Natural killer cell (primary cell): ENCODE measurements at regions of chr10 and their contacts with region 1.

Region 1: DNA sequence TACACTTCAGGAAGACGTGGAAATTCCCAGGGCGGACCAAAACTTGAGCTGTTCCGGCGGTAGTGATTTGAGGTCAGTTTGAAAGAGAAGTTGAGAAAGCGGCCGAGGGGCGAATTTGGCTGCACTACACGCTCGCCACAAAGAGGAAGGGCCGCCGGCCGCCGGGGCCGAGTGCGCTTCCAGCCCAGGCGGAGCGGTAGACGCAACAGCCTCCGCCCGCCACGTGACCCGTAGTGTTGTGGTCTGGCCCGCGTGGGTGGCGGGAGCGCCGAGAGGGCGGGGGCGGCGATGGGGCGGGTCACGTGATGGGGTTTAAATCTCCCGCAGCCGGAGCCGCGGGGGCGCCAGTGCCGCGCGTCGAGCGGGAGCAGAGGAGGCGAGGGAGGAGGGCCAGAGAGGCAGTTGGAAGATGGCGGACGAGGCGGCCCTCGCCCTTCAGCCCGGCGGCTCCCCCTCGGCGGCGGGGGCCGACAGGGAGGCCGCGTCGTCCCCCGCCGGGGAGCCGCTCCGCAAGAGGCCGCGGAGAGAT is at the start of gene SIRT1:
- DNase-seq: peak; percentile 90 to 95
- ATAC-seq: peak; percentile 74 to 87 (median 79)
- H3K4me3 ChIP-seq: peak within 1 kb of the TSS; percentile 63
- H3K4me3 Mint-ChIP-seq: peak within 1 kb of the TSS; percentile 98
- H3K27ac ChIP-seq: peak within 1 kb of the TSS; percentile 87
- H3K27ac Mint-ChIP-seq: peak within 1 kb of the TSS; percentile 95
- H3K4me1 ChIP-seq: peaks cover 23% of the 10 kb centered on the region
- H3K4me1 Mint-ChIP-seq: peaks cover 37 to 46% of the 10 kb centered on the region in 2 donors
- H3K27me3 ChIP-seq: no peaks in the 10 kb centered on the region
- H3K27me3 Mint-ChIP-seq: no peaks in the 10 kb centered on the region
- CTCF ChIP-seq: no peak
- total RNA-seq, gene SIRT1: 38.2 to 51.0 (median 48.2) TPM

Region 2: GRCh38 chr10:67669978-67670377 is 214.4 kb before region 1 on chr10:
- intact Hi-C with region 1: no loop called
- DNase-seq: no peak
- ATAC-seq: no peak
- H3K4me3 ChIP-seq: no peak overlapping the region
- H3K4me3 Mint-ChIP-seq: no peak overlapping the region
- H3K27ac ChIP-seq: no peak overlapping the region
- H3K27ac Mint-ChIP-seq: no peak overlapping the region
- H3K4me1 ChIP-seq: no peaks in the 10 kb centered on the region
- H3K4me1 Mint-ChIP-seq: no peaks in the 10 kb centered on the region
- H3K27me3 ChIP-seq: no peaks in the 10 kb centered on the region
- H3K27me3 Mint-ChIP-seq: peaks cover 5 to 15% of the 10 kb centered on the region in 2 donors
- CTCF ChIP-seq: no peak

Region 3: DNA sequence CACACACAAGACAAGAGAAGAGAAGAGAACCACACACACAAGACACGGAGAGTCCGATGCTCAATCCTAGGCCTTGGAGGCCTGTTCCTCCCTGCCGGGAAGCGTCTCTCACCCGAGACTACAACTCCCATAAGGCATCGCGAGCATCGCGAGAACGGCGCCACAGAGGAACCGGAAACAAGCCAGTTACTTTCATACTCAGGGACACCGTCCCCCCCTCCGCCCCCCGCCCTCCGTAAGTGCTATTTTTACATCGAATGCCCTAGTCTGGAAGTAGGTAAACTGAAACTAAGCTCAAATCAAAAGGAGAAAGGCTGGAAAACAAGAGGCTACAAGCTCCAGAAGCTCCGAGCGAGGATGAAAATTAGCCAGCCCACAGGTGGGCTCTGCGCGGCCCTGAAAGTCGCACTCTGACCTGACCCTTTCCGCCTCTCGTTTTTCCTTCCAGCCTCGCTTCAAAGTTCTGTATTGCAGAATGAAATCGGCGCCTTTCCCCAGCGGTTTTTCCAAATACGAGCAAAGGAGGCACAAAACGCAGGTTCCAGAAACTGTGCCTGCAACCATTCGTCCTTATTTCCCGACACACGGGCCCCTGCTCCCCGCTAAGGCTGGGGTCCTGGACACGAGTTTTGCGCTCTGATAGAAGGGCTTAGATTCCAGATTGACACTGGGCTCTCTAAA is 34.9 kb before region 1 on chr10:
- intact Hi-C with region 1: loop called (anchors 2 kb)
- DNase-seq: peak; percentile 87 to 95
- ATAC-seq: peak; percentile 98 to 100 (median 99)
- H3K4me3 ChIP-seq: peak overlapping the region; percentile 85
- H3K4me3 Mint-ChIP-seq: peak overlapping the region; percentile 94
- H3K27ac ChIP-seq: peak overlapping the region; percentile 91
- H3K27ac Mint-ChIP-seq: peak overlapping the region; percentile 89 to 91
- H3K4me1 ChIP-seq: peaks cover 9% of the 10 kb centered on the region
- H3K4me1 Mint-ChIP-seq: peaks cover 10 to 12% of the 10 kb centered on the region in 2 donors
- H3K27me3 ChIP-seq: no peaks in the 10 kb centered on the region
- H3K27me3 Mint-ChIP-seq: no peaks in the 10 kb centered on the region
- CTCF ChIP-seq: no peak

Region 4: GRCh38 chr10:68074775-68075549 is 190.6 kb after region 1 on chr10 and contains the start of gene HERC4:
- intact Hi-C with region 1: loop called (anchors 1 kb)
- DNase-seq: peak; percentile 83 to 96
- ATAC-seq: peak; percentile 87 to 97 (median 90)
- H3K4me3 ChIP-seq: peak within 1 kb of the TSS; percentile 78
- H3K4me3 Mint-ChIP-seq: peak within 1 kb of the TSS; percentile 94
- H3K27ac ChIP-seq: peak within 1 kb of the TSS; percentile 95
- H3K27ac Mint-ChIP-seq: peak within 1 kb of the TSS; percentile 92 to 94
- H3K4me1 ChIP-seq: peaks cover 5% of the 10 kb centered on the region
- H3K4me1 Mint-ChIP-seq: peaks cover 31 to 32% of the 10 kb centered on the region in 2 donors
- H3K27me3 ChIP-seq: no peaks in the 10 kb centered on the region
- H3K27me3 Mint-ChIP-seq: no peaks in the 10 kb centered on the region
- CTCF ChIP-seq: no peak
- total RNA-seq, gene HERC4: 78.4 to 104 (median 83.9) TPM